ENCODE measurements at regions of chr19 and their contacts with region 1.

Region 1: DNA sequence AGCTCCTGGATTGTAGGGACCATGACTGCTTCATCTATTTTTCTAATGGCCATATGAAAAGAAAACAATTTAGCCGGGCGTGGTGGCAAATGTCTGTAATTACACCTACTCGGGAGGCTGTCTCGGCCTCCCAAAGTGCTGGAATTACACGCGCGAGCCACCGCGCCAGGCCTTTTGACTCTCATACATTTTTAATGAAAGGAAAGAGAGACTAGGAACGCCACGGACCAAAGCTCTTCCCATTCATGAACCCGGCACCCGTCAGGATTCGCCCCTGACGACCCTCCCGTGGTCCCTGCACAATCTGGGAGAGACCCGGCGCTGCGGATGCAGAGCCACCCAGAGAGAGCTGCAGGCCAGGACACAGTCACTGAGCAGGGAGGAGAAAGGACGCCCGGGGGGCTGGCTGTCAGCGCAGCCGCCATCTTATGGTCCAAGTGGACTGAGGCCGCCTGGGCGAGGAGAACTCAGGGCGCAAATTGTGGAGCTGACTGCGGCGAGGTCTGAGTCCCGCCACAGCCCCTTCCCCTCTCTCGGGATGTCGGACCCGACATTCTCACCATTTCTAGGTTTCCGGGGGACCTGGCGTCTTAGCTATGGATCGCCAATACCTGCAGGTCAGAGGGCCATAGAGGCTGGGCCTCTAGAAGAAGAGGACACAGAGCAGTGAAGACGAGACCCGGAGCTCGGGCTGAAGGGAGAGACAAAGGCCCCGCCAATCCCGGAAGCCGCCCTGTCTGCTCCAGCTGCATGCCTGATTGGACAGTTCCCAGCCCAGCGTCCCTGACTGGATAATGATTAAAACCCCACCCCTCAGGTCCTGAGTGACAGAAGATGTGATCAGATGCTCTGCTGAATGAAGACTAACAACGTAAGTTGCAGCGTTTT is at the start of gene ZNF681:
- DNase-seq: peak; percentile 94
- H3K4me3 Mint-ChIP-seq: peak within 1 kb of the TSS; percentile 95
- H3K27ac Mint-ChIP-seq: peak within 1 kb of the TSS; percentile 93
- H3K4me1 Mint-ChIP-seq: peaks cover 19% of the 10 kb centered on the region
- H3K27me3 Mint-ChIP-seq: no peaks in the 10 kb centered on the region
- total RNA-seq, gene ZNF681: 3.1 to 5.1 TPM

Region 2: GRCh38 chr19:22052644-22053013 is 1705.8 kb before region 1 on chr19:
- CTCF ChIA-PET with region 1: no interaction called
- intact Hi-C with region 1: loop called (anchors 5 kb)
- DNase-seq: peak; percentile 26
- H3K4me3 Mint-ChIP-seq: peak overlapping the region; percentile 94
- H3K27ac Mint-ChIP-seq: peak overlapping the region; percentile 85
- H3K4me1 Mint-ChIP-seq: no peaks in the 10 kb centered on the region
- H3K27me3 Mint-ChIP-seq: no peaks in the 10 kb centered on the region

Region 3: GRCh38 chr19:23395041-23395721 is 363.2 kb before region 1 on chr19 and contains the start of gene ZNF91:
- CTCF ChIA-PET with region 1: no interaction called
- intact Hi-C with region 1: loop called (anchors 1 kb)
- DNase-seq: peak; percentile 97
- H3K4me3 Mint-ChIP-seq: peak within 1 kb of the TSS; percentile 97
- H3K27ac Mint-ChIP-seq: peak within 1 kb of the TSS; percentile 98
- H3K4me1 Mint-ChIP-seq: peaks cover 29% of the 10 kb centered on the region
- H3K27me3 Mint-ChIP-seq: no peaks in the 10 kb centered on the region
- total RNA-seq, gene ZNF91: 33.7 to 36.3 TPM

Region 4: GRCh38 chr19:23771841-23772271 is 13.4 kb after region 1 on chr19:
- CTCF ChIA-PET with region 1: no interaction called
- intact Hi-C with region 1: loop called (anchors 1 kb)
- DNase-seq: peak; percentile 27
- H3K4me3 Mint-ChIP-seq: no peak overlapping the region
- H3K27ac Mint-ChIP-seq: peak overlapping the region; percentile 57
- H3K4me1 Mint-ChIP-seq: peaks cover 27% of the 10 kb centered on the region
- H3K27me3 Mint-ChIP-seq: no peaks in the 10 kb centered on the region

Region 5: GRCh38 chr19:23914402-23915301 is 156.2 kb after region 1 on chr19 and contains the start of gene ZNF726:
- CTCF ChIA-PET with region 1: no interaction called
- intact Hi-C with region 1: loop called (anchors 1 kb)
- DNase-seq: peak; percentile 93
- H3K4me3 Mint-ChIP-seq: peak within 1 kb of the TSS; percentile 96
- H3K27ac Mint-ChIP-seq: peak within 1 kb of the TSS; percentile 91
- H3K4me1 Mint-ChIP-seq: peaks cover 11% of the 10 kb centered on the region
- H3K27me3 Mint-ChIP-seq: peaks cover under 1% of the 10 kb centered on the region
- total RNA-seq, gene ZNF726: 22.3 to 22.8 TPM

Region 6: DNA sequence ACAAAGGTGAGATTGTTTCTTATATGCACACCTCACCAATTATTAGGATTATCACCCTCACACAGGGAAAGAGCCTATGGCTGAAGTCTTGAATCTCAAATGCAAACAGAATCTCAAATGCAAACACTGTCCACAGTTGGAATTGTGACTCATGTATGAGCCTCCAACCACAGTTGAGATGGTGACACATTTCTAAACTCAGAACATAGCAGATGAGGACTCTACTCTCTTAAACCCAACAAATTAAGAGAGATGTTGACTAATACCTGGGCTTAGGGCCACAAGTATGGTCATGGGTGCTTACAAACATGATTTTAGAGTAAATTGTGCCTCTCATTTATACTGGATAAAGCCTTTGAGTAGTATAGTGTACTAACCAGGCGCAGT is 296.1 kb after region 1 on chr19:
- CTCF ChIA-PET with region 1: no interaction called
- intact Hi-C with region 1: no loop called
- DNase-seq: no peak
- H3K4me3 Mint-ChIP-seq: no peak overlapping the region
- H3K27ac Mint-ChIP-seq: peak overlapping the region; percentile 18
- H3K4me1 Mint-ChIP-seq: peaks cover 11% of the 10 kb centered on the region
- H3K27me3 Mint-ChIP-seq: no peaks in the 10 kb centered on the region

Region 7: GRCh38 chr19:24086974-24087595 is 328.7 kb after region 1 on chr19 and contains the start of gene ZNF254:
- CTCF ChIA-PET with region 1: no interaction called
- intact Hi-C with region 1: loop called (anchors 2 kb)
- DNase-seq: peak; percentile 92
- H3K4me3 Mint-ChIP-seq: peak within 1 kb of the TSS; percentile 88
- H3K27ac Mint-ChIP-seq: peak within 1 kb of the TSS; percentile 83
- H3K4me1 Mint-ChIP-seq: peaks cover 2% of the 10 kb centered on the region
- H3K27me3 Mint-ChIP-seq: no peaks in the 10 kb centered on the region
- total RNA-seq, gene ZNF254: 6.6 to 7.5 TPM

Measured in activated naive CD4-positive, alpha-beta T cell treated with anti-CD3 and anti-CD28 coated beads for 36 hours (primary cell).